ENCODE measurements at regions of chr4 and their contacts with region 1.

Region 1: DNA sequence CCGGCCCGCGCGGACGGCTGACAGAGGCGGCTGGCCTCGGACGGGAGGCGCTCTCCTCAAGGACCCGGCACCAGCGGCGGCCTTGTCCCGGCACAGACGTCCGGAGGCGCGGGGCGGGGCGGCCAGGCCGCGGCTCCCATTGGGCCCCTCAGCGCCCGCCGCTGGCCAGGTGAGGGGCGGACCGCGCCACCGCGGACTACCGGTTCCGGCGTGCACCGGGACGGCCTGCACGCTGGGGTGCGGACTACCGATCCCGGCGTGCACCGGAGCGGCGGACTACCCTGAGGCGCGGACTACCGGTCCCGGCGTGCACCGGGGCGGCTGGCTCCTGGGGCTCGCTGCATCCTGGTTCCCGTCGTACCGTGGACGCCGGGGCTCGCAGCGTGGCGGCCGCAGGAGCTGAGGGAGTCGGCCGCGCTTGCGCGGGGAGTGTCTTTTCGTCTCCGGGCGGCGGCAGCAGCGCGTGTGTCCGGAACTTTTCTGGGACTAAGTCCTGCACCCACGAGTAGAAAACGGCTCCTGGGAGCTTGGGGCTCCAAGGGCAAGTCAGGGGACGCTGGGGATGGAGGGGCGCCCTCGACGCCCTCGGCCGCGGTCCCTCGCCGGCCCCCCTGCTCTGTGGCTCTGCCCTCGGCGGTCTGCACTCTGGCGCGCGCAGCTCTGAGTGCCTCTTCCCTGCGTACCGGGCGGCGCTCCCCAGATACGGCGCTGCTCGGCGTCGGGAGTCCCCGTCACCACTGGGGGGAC is at the start of gene LETM1:
- DNase-seq: peak; percentile 94 to 98
- H3K4me3 ChIP-seq: peak within 1 kb of the TSS; percentile 65 to 69
- H3K27ac ChIP-seq: peak within 1 kb of the TSS; percentile 77 to 84
- H3K4me1 ChIP-seq: peaks cover 9 to 34% (median 19%) of the 10 kb centered on the region in 4 donors
- H3K27me3 ChIP-seq: peaks cover 0 to 2% of the 10 kb centered on the region in 2 donors
- CTCF ChIP-seq: no peak

Region 2: GRCh38 chr4:1899149-1900086 is 43.2 kb after region 1 on chr4:
- intact Hi-C with region 1: loop called (anchors 10 kb)
- DNase-seq: peak; percentile 61 to 75
- H3K4me3 ChIP-seq: no peak overlapping the region
- H3K27ac ChIP-seq: no peak overlapping the region
- H3K4me1 ChIP-seq: peaks cover 0 to 9% (median 0%) of the 10 kb centered on the region in 4 donors
- H3K27me3 ChIP-seq: no peaks in the 10 kb centered on the region
- CTCF ChIP-seq: peak; percentile 80 to 85

Measured in tibial artery (tissue), 4 donors.